H1 (cell line): ENCODE measurements at regions of chr12 and their contacts with region 1.

Region 1: GRCh38 chr12:31325877-31326631 is at the start of gene SINHCAF:
- DNase-seq: peak; percentile 99
- H3K4me3 ChIP-seq: peak within 1 kb of the TSS; percentile 95 to 99 (median 99)
- H3K27ac ChIP-seq: peak within 1 kb of the TSS; percentile 94
- H3K4me1 ChIP-seq: peaks cover 1 to 12% (median 3%) of the 10 kb centered on the region in 4 experiments; a peak in 5 of 7 replicates
- H3K27me3 ChIP-seq: no peaks in the 10 kb centered on the region
- CTCF ChIP-seq: no peak
- EP300 ChIP-seq: peak in 1 of 2 experiments; percentile 24; a peak in 1 of 3 replicates
- POLR2A ChIP-seq: peak; percentile 96 to 99
- RAD21 ChIP-seq: no peak
- total RNA-seq, gene SINHCAF: 536 and 576 TPM in 2 replicates

Region 2: DNA sequence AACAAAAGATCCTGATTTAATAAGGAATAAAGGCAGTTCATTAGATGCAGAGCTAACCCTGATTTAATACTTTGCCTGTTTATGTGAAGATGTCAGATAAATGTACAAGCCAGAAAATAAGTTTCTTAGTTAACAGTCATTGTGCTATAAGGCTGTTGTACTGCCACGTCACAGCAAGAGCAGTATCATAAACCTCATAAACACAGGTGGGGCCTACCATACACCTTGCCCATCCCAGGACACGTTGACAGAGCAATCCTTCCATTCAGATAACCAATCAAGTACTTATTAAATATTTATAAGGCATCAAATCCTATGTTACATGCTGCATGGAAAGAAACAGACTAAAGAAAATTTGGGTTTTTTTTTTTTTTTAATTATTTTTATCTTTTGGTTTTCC is 36.6 kb before region 1 on chr12:
- CTCF ChIA-PET with region 1: no interaction called
- POLR2A ChIA-PET with region 1: interaction called, 19 read pairs
- DNase-seq: no peak
- H3K4me3 ChIP-seq: no peak overlapping the region
- H3K27ac ChIP-seq: no peak overlapping the region
- H3K4me1 ChIP-seq: peaks cover 0 to 3% (median 0%) of the 10 kb centered on the region in 4 experiments; a peak in 2 of 7 replicates
- H3K27me3 ChIP-seq: no peaks in the 10 kb centered on the region
- CTCF ChIP-seq: no peak
- EP300 ChIP-seq: no peak
- POLR2A ChIP-seq: 0 out of 3 replicates have a peak, but pooled peaks of 1 of the 2 experiments have one; percentile 45
- RAD21 ChIP-seq: no peak

Region 3: GRCh38 chr12:31339831-31340622 is 14.0 kb after region 1 on chr12:
- CTCF ChIA-PET with region 1: interaction called, 4 read pairs
- POLR2A ChIA-PET with region 1: interaction called, 40 read pairs
- DNase-seq: no peak
- H3K4me3 ChIP-seq: no peak overlapping the region; a peak in 1 of 8 replicates
- H3K27ac ChIP-seq: no peak overlapping the region
- H3K4me1 ChIP-seq: peaks cover 0 to 10% (median 5%) of the 10 kb centered on the region in 4 experiments; a peak in 4 of 7 replicates
- H3K27me3 ChIP-seq: no peaks in the 10 kb centered on the region
- CTCF ChIP-seq: no peak
- EP300 ChIP-seq: peak in 1 of 2 experiments; percentile 76; a peak in 1 of 3 replicates
- POLR2A ChIP-seq: no peak
- RAD21 ChIP-seq: no peak

Region 4: GRCh38 chr12:31353750-31354708 is 28.0 kb after region 1 on chr12:
- CTCF ChIA-PET with region 1: interaction called, 3 read pairs
- POLR2A ChIA-PET with region 1: interaction called, 14 read pairs
- DNase-seq: no peak
- H3K4me3 ChIP-seq: no peak overlapping the region; a peak in 1 of 8 replicates
- H3K27ac ChIP-seq: no peak overlapping the region; the same call in 1 of the 2 replicates
- H3K4me1 ChIP-seq: peaks cover 0 to 8% (median 5%) of the 10 kb centered on the region in 4 experiments; a peak in 3 of 7 replicates
- H3K27me3 ChIP-seq: no peaks in the 10 kb centered on the region
- CTCF ChIP-seq: no peak
- EP300 ChIP-seq: no peak
- POLR2A ChIP-seq: no peak
- RAD21 ChIP-seq: 0 out of 4 replicates have a peak, but pooled peaks of 1 of the 2 experiments have one; percentile 1

Region 5: GRCh38 chr12:31369712-31370521 is 43.9 kb after region 1 on chr12:
- CTCF ChIA-PET with region 1: interaction called, 3 read pairs
- POLR2A ChIA-PET with region 1: interaction called, 66 read pairs
- DNase-seq: no peak
- H3K4me3 ChIP-seq: peak overlapping the region; percentile 6 to 56 (median 42); a peak in 7 of 8 replicates
- H3K27ac ChIP-seq: peak overlapping the region; percentile 91
- H3K4me1 ChIP-seq: peaks cover 14 to 24% (median 18%) of the 10 kb centered on the region in 4 experiments; a peak in 6 of 7 replicates
- H3K27me3 ChIP-seq: no peaks in the 10 kb centered on the region
- CTCF ChIP-seq: no peak
- EP300 ChIP-seq: no peak
- POLR2A ChIP-seq: no peak
- RAD21 ChIP-seq: no peak

Region 6: DNA sequence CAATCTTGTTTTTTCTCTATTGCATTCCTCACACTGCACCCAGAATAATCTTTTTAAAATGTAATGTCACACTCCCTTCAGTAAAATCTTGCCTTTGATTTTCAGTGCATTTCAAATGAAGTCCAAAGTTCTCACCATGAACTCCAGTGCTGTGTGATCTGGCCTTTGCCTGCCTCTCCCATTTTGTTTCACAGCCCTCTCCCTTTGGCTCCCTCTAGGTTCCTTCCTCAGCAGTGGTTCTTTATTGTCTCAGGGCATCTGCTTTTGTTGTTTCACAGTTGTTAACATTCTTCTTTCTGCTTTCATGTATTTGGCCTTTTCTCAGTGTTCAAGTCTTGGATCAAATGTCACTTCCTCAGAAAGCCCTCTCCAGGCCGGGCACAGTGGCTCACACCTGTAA is 487.3 kb after region 1 on chr12:
- CTCF ChIA-PET with region 1: no interaction called
- POLR2A ChIA-PET with region 1: no interaction called
- DNase-seq: no peak
- H3K4me3 ChIP-seq: no peak overlapping the region
- H3K27ac ChIP-seq: no peak overlapping the region
- H3K4me1 ChIP-seq: peaks cover 0 to 2% (median 0%) of the 10 kb centered on the region in 4 experiments; a peak in 4 of 7 replicates
- H3K27me3 ChIP-seq: no peaks in the 10 kb centered on the region
- CTCF ChIP-seq: peak in 2 of 3 experiments; percentile 23 to 52; a peak in 2 of 4 replicates
- EP300 ChIP-seq: no peak
- POLR2A ChIP-seq: no peak
- RAD21 ChIP-seq: peak; percentile 37 to 58